Endothelial cell of umbilical vein (primary cell): ENCODE measurements at regions of chr7 and their contacts with region 1.

Region 1: GRCh38 chr7:25093268-25093826 is 31.7 kb downstream of the CYCS start:
- DNase-seq: peak; percentile 74
- H3K4me3 ChIP-seq: no peak overlapping the region
- H3K27ac ChIP-seq: no peak overlapping the region
- H3K4me1 ChIP-seq: peaks cover 2% of the 10 kb centered on the region
- H3K27me3 ChIP-seq: peaks cover 4% of the 10 kb centered on the region in 2 experiments
- CTCF ChIP-seq: peak; percentile 89 to 90
- POLR2A ChIP-seq: no peak

Region 2: GRCh38 chr7:23570592-23571200 is 1522.7 kb before region 1 on chr7:
- CTCF ChIA-PET with region 1: no interaction called
- POLR2A ChIA-PET with region 1: no interaction called
- dilution Hi-C with region 1: no loop called
- intact Hi-C with region 1: loop called (anchors 10 kb)
- DNase-seq: peak; percentile 77
- H3K4me3 ChIP-seq: no peak overlapping the region
- H3K27ac ChIP-seq: no peak overlapping the region
- H3K4me1 ChIP-seq: no peaks in the 10 kb centered on the region
- H3K27me3 ChIP-seq: peaks cover 0 to 3% of the 10 kb centered on the region in 2 experiments
- CTCF ChIP-seq: peak; percentile 77 to 79
- POLR2A ChIP-seq: no peak

Region 3: DNA sequence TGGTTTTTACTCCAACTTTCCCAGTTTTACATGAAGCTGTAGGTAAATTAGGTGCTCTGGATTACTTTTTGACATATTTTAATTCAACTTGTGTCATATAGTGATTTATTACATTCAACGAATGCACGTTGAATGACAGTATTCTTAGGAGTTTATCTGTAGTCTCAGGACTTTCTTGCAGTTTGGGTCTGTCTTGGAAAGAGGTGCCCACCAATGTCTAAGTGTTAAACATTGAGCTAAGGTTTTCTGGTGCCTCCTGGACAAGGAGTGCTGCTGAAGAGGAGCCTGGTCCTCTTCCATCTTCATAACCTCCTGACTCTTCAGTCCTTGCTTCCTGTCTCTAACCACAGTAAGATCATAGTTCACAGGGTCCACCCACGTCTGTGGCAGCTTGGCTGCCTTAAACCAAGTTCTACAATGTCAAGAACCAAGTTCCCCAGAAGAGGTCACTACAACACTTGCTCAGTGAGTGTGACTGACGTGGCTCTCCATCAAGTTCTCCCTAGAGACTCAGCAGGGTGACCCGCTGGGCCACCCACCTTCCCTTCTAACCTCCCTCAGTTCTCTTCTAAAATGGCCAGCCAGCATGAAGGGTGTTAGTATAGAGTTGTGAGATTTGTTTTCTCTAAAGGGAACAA is 803.2 kb before region 1 on chr7:
- CTCF ChIA-PET with region 1: no interaction called
- POLR2A ChIA-PET with region 1: no interaction called
- dilution Hi-C with region 1: no loop called
- intact Hi-C with region 1: loop called (anchors 10 kb)
- DNase-seq: peak; percentile 20
- H3K4me3 ChIP-seq: no peak overlapping the region
- H3K27ac ChIP-seq: no peak overlapping the region
- H3K4me1 ChIP-seq: no peaks in the 10 kb centered on the region
- H3K27me3 ChIP-seq: peaks cover 11 to 15% of the 10 kb centered on the region in 2 experiments
- CTCF ChIP-seq: peak in 1 of 2 donors; percentile 28
- POLR2A ChIP-seq: no peak

Region 4: DNA sequence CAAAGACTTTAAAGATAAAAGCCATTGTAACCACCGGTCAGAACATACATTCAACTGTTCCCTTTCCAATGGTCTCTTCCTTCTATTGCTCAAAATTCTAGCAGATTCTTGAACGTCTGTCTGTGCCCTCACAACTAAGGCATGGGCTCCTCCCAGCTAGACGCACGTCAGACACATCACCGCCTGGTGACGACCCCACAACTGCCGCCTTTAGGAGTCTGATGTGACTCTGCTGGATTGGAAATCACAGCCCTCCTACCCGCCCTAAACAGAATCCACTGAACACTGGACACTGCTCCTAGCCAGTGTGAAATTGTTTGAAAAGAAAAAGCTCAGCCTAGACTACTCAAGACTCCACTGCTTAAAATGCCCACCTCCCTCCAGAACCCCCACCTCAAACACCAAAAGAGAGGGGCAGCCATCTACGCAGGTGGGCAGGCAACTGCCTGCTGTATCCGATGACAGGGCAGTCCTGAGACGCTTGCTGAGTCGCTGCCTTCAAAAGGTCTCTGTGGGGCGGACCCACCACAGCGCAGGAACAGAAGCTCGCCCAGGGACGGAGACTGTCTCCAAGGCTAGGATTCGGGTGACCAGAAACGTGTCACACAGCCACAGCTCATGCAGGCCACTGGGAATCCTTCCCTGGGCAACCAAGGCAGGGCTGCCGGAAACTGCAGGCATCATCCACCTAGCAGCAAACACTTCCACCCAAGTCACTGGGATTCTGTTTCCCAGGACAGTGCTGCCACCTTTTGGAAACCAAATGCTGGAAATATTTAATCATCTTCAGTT is 370.8 kb before region 1 on chr7:
- CTCF ChIA-PET with region 1: interaction called, 11 read pairs
- POLR2A ChIA-PET with region 1: no interaction called
- dilution Hi-C with region 1: no loop called
- intact Hi-C with region 1: no loop called
- DNase-seq: peak; percentile 36
- H3K4me3 ChIP-seq: no peak overlapping the region
- H3K27ac ChIP-seq: no peak overlapping the region
- H3K4me1 ChIP-seq: no peaks in the 10 kb centered on the region
- H3K27me3 ChIP-seq: no peaks in the 10 kb centered on the region
- CTCF ChIP-seq: peak; percentile 9 to 35
- POLR2A ChIP-seq: no peak

Region 5: DNA sequence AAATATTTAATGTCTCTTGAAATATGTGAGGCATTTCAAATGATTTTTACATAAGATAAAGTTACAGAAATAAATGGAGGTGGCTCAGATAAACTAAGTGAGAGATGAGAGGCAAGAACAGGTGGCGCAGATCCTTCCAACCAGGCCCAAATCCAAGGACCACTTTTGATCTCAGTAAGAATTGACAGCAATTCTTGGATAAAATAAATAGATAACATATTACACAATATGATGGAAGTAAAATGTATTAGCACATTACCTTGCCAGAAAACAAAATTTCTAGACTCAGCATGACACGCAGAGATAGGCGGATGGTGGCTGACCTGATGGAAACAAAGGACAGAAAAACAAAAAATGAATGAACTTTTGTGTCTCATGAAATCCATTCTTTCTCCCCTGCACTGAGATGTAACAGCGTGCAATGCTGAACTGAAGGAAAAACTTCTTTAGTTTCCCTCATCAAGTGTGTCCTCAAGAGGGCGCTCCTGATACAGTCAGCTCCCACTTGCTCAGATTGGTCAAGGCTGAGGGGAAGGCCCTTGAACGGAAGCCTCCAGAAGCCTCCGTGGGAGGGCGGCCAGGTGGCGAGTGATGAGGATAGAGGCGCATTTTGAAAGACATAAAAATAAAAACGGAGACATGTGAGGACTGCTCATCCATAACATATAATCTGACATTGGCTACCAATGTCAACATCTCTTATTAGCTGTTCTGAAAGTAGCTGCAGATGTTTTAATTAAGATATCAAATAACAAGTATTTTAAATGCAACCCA is 273.2 kb before region 1 on chr7:
- CTCF ChIA-PET with region 1: interaction called, 97 read pairs
- POLR2A ChIA-PET with region 1: no interaction called
- dilution Hi-C with region 1: no loop called
- intact Hi-C with region 1: loop called (anchors 1 kb)
- DNase-seq: peak; percentile 85
- H3K4me3 ChIP-seq: no peak overlapping the region
- H3K27ac ChIP-seq: peak overlapping the region; percentile 86
- H3K4me1 ChIP-seq: peaks cover 15% of the 10 kb centered on the region
- H3K27me3 ChIP-seq: no peaks in the 10 kb centered on the region
- CTCF ChIP-seq: peak; percentile 80 to 83
- POLR2A ChIP-seq: no peak

Region 6: GRCh38 chr7:24882989-24883621 is 210.2 kb before region 1 on chr7:
- CTCF ChIA-PET with region 1: interaction called, 12 read pairs
- POLR2A ChIA-PET with region 1: no interaction called
- dilution Hi-C with region 1: no loop called
- intact Hi-C with region 1: no loop called
- DNase-seq: peak; percentile 67
- H3K4me3 ChIP-seq: no peak overlapping the region
- H3K27ac ChIP-seq: peak overlapping the region; percentile 23
- H3K4me1 ChIP-seq: peaks cover 47% of the 10 kb centered on the region
- H3K27me3 ChIP-seq: no peaks in the 10 kb centered on the region
- CTCF ChIP-seq: no peak
- POLR2A ChIP-seq: no peak

Region 7: GRCh38 chr7:25075459-25075858 is 17.9 kb before region 1 on chr7:
- CTCF ChIA-PET with region 1: interaction called, 38 read pairs
- POLR2A ChIA-PET with region 1: interaction called, 3 read pairs
- dilution Hi-C with region 1: no loop called
- intact Hi-C with region 1: loop called (anchors 1 kb)
- DNase-seq: no peak
- H3K4me3 ChIP-seq: no peak overlapping the region
- H3K27ac ChIP-seq: no peak overlapping the region
- H3K4me1 ChIP-seq: no peaks in the 10 kb centered on the region
- H3K27me3 ChIP-seq: peaks cover 0 to 2% of the 10 kb centered on the region in 2 experiments
- CTCF ChIP-seq: no peak
- POLR2A ChIP-seq: no peak

Region 8: DNA sequence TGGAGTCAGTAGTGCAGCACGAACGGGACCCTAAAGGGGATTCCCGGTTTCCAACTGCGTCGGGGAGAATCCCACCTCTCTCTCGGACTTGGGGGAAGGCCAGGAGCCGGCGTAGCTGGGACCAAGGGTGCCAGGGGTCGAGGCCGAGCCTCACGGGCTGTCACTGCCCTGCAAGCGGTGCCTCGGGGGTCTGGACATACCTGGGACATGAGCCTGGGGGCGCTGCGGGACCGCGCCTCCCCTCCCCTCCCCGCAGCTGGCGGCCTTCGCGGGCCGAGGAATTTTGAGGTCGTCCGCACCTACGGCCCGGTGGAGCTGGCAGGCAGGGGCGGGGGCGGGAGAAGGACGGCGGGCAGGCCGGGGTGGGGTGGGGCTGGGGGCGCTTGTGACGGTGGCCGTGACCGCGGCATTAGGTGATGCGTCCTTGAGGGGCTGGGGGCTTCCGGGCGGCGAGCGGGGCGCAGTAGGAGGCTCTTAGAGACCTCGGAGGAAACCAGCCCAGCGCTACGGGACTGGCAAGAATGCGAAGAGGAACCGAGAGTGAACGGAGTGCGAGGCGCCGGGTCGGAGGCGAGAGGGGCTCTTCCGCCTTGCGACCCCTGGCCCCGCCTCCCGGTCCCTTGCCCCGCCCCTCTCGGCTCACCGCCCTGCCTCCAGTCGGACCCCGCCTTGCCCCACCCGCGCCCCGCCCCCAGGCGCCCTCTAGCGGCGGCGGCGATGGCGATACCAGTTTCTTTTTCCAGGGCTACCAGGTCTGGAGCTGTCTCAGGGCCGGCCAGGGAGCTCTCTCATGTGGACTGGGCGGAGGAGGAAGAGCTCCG is 86.6 kb after region 1 on chr7:
- CTCF ChIA-PET with region 1: no interaction called
- POLR2A ChIA-PET with region 1: no interaction called
- dilution Hi-C with region 1: no loop called
- intact Hi-C with region 1: no loop called
- DNase-seq: peak; percentile 83
- H3K4me3 ChIP-seq: peak overlapping the region; percentile 46 to 62 (median 56)
- H3K27ac ChIP-seq: no peak overlapping the region
- H3K4me1 ChIP-seq: peaks cover 8% of the 10 kb centered on the region
- H3K27me3 ChIP-seq: peaks cover 1 to 7% of the 10 kb centered on the region in 2 experiments
- CTCF ChIP-seq: peak; percentile 51 to 82
- POLR2A ChIP-seq: no peak